AG04450 (cell line): ENCODE measurements at regions of chr4 and their contacts with region 1.

Region 1: DNA sequence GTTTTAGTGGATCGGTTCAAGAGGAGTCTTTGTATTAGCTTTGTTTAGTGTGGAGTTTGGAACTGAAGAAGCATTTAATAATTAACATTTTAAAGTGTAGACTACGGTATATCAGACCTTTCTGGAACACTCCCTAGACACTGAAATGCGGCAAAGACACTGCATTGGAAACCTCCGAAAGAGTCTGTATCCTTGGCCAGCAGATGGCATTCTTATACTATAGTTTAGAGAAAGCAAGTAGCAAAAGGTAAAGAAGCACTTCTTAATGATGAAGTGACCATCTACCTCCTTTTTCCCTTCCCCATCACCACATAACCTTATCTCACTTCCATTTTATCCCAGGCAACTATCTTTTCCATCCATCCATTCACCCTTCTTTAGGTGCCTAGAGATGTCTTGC is 7.6 kb downstream of the FABP2 start:
- DNase-seq: no peak
- H3K4me3 ChIP-seq: no peak overlapping the region
- H3K27ac ChIP-seq: no peak overlapping the region
- H3K27me3 ChIP-seq: no peaks in the 10 kb centered on the region
- CTCF ChIP-seq: peak; percentile 64

Region 2: GRCh38 chr4:119490335-119490734 is 176.0 kb after region 1 on chr4:
- CTCF ChIA-PET with region 1: interaction called, 27 read pairs
- POLR2A ChIA-PET with region 1: no interaction called
- DNase-seq: no peak
- H3K4me3 ChIP-seq: no peak overlapping the region
- H3K27ac ChIP-seq: no peak overlapping the region
- H3K27me3 ChIP-seq: no peaks in the 10 kb centered on the region
- CTCF ChIP-seq: peak; percentile 45